Caco-2 (cell line): ENCODE measurements at regions of chr17 and their contacts with region 1.

Region 1: GRCh38 chr17:30921544-30922196 is at the start of gene ADAP2:
- DNase-seq: peak; percentile 58 to 81
- H3K4me3 ChIP-seq: peak within 1 kb of the TSS; percentile 42
- H3K4me3 Mint-ChIP-seq: peak within 1 kb of the TSS; percentile 83
- H3K27ac Mint-ChIP-seq: peak within 1 kb of the TSS; percentile 71
- H3K4me1 ChIP-seq: no peaks in the 10 kb centered on the region
- H3K4me1 Mint-ChIP-seq: peaks cover 18% of the 10 kb centered on the region
- H3K27me3 ChIP-seq: no peaks in the 10 kb centered on the region; the same call in none of the 2 replicates
- H3K27me3 Mint-ChIP-seq: peaks cover 16% of the 10 kb centered on the region
- CTCF ChIP-seq: no peak
- total RNA-seq, gene ADAP2: 1.8 and 3.1 TPM in 2 replicates

Region 2: DNA sequence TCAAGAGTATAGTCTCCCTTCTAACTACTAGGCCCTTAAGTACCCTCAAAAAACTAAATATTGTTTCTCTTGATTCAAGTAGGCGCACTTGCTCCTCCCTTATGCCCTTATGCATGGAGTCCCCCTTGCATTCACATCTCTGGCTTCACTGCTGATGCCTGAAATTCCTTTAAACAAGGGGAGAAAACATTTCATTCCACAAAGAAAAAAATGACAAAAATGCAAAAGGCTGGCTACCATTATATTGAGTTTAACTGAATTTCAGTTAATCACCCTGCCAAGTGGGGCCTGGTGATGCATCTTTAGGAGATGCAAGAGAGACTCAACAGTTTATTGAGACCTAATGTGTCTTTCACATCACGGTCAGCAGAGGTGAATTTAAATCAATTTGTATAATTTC is 132.8 kb before region 1 on chr17:
- CTCF ChIA-PET with region 1: no interaction called
- POLR2A ChIA-PET with region 1: no interaction called
- intact Hi-C with region 1: no loop called
- DNase-seq: no peak
- H3K4me3 ChIP-seq: no peak overlapping the region
- H3K4me3 Mint-ChIP-seq: no peak overlapping the region
- H3K27ac Mint-ChIP-seq: no peak overlapping the region
- H3K4me1 ChIP-seq: no peaks in the 10 kb centered on the region
- H3K4me1 Mint-ChIP-seq: peaks cover 7% of the 10 kb centered on the region
- H3K27me3 ChIP-seq: no peaks in the 10 kb centered on the region
- H3K27me3 Mint-ChIP-seq: no peaks in the 10 kb centered on the region
- CTCF ChIP-seq: no peak

Region 3: GRCh38 chr17:31008374-31009041 is 86.8 kb after region 1 on chr17:
- CTCF ChIA-PET with region 1: no interaction called
- POLR2A ChIA-PET with region 1: no interaction called
- intact Hi-C with region 1: loop called (anchors 10 kb)
- DNase-seq: peak; percentile 67 to 71
- H3K4me3 ChIP-seq: peak overlapping the region; percentile 74
- H3K4me3 Mint-ChIP-seq: peak overlapping the region; percentile 79
- H3K27ac Mint-ChIP-seq: peak overlapping the region; percentile 76
- H3K4me1 ChIP-seq: no peaks in the 10 kb centered on the region; the same call in 1 of the 2 replicates
- H3K4me1 Mint-ChIP-seq: peaks cover 18% of the 10 kb centered on the region
- H3K27me3 ChIP-seq: no peaks in the 10 kb centered on the region
- H3K27me3 Mint-ChIP-seq: no peaks in the 10 kb centered on the region
- CTCF ChIP-seq: no peak